Activated CD8-positive, alpha-beta T cell treated with anti-CD3 and anti-CD28 coated beads for 36 hours (primary cell): ENCODE measurements at regions of chr11 and their contacts with region 1.

Region 1: DNA sequence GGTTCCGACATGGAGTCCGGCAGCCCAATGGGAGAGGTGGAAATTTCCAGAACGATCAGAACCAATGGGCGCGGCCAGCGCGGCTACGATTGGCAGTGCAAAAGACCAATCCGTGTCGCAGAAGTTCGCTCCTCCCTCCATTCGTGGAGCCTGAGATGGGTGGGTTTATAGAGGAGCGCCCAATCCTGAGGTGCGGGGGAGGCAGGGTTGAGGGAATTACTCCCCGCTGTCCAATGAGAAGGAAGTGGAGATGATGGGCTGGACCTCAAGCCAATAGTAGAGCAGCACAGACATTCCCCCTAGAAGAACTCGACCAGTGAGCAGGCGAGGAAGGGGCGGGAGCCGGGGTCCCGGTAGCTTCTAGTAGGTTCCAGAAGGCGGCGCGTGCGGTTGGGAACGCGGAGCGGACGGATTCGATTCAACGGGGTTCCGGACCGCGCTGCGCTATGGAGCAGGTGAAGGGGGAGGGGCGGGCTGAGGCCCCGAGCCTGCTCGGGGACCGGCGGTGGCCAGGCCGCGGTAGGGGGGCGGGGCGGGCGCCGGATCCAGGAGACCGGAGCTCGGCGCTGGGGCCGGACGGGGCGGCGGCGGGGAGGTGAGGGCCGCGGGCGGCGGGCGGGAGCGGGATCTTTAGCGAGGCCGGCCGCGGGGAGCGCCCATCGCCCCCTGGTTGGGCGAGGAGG is at the start of gene STIP1:
- DNase-seq: peak; percentile 99
- ATAC-seq: peak; percentile 89
- H3K4me3 Mint-ChIP-seq: no peak within 1 kb of the TSS
- H3K27ac Mint-ChIP-seq: peak within 1 kb of the TSS; percentile 98
- H3K4me1 Mint-ChIP-seq: peaks cover 37% of the 10 kb centered on the region
- H3K27me3 Mint-ChIP-seq: no peaks in the 10 kb centered on the region
- CTCF ChIP-seq: no peak
- total RNA-seq, gene STIP1: 396 to 416 TPM

Region 2: DNA sequence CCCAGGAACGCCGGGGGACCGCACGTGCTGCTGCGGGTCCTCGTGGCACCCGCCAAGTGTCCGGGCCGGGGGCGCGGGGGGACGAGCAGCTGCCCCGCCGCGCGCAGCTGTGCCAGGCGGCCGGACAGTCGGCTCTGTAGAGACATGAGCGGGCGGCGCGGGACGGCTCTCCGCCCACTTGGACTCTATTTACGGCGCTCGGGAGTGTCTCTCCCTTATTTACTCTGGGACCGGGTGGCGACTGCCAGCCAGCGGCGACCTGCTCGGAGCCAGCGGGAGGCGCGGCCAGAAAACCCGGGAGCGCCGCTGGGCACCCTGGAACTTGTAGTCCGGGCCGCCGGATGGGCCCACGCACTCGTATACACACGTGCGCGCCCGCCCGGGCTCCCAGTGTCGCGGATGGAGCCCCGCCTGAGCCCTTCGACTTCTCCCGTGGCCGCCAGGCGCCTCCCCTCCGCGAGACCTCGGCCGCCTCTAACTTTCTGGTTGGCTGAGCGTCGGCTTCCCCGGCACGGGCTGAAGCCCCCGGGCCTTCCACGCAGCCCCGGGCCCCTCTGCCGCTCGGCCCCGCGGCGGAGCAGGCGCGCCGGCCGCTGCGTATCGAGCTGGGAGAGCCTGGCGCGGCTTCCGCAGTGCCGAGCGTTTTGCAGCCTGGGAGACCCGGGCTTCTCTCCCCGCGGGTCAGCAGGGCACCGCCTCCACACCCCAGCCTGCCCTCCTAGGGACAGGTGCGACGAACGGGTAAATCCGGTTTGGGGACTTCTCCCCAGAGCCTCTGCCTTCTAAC is 19.9 kb before region 1 on chr11 and contains the start of gene MACROD1:
- CTCF ChIA-PET with region 1: interaction called, 5 read pairs
- POLR2A ChIA-PET with region 1: interaction called, 25 read pairs
- intact Hi-C with region 1: no loop called
- DNase-seq: peak; percentile 92
- ATAC-seq: peak; percentile 93
- H3K4me3 Mint-ChIP-seq: peak within 1 kb of the TSS; percentile 84
- H3K27ac Mint-ChIP-seq: peak within 1 kb of the TSS; percentile 86
- H3K4me1 Mint-ChIP-seq: peaks cover 18% of the 10 kb centered on the region
- H3K27me3 Mint-ChIP-seq: no peaks in the 10 kb centered on the region
- CTCF ChIP-seq: no peak
- total RNA-seq, gene MACROD1: 38.7 to 38.8 TPM

Region 3: GRCh38 chr11:64173616-64174355 is 12.2 kb before region 1 on chr11:
- CTCF ChIA-PET with region 1: no interaction called
- POLR2A ChIA-PET with region 1: interaction called, 14 read pairs
- intact Hi-C with region 1: no loop called
- DNase-seq: no peak
- ATAC-seq: no peak
- H3K4me3 Mint-ChIP-seq: no peak overlapping the region
- H3K27ac Mint-ChIP-seq: no peak overlapping the region
- H3K4me1 Mint-ChIP-seq: peaks cover 16% of the 10 kb centered on the region
- H3K27me3 Mint-ChIP-seq: no peaks in the 10 kb centered on the region
- CTCF ChIP-seq: no peak

Region 4: GRCh38 chr11:64196626-64197025 is 10.7 kb after region 1 on chr11:
- CTCF ChIA-PET with region 1: no interaction called
- POLR2A ChIA-PET with region 1: interaction called, 206 read pairs
- intact Hi-C with region 1: no loop called
- DNase-seq: no peak
- ATAC-seq: no peak
- H3K4me3 Mint-ChIP-seq: no peak overlapping the region
- H3K27ac Mint-ChIP-seq: peak overlapping the region; percentile 40
- H3K4me1 Mint-ChIP-seq: peaks cover 21% of the 10 kb centered on the region
- H3K27me3 Mint-ChIP-seq: no peaks in the 10 kb centered on the region
- CTCF ChIP-seq: no peak

Region 5: DNA sequence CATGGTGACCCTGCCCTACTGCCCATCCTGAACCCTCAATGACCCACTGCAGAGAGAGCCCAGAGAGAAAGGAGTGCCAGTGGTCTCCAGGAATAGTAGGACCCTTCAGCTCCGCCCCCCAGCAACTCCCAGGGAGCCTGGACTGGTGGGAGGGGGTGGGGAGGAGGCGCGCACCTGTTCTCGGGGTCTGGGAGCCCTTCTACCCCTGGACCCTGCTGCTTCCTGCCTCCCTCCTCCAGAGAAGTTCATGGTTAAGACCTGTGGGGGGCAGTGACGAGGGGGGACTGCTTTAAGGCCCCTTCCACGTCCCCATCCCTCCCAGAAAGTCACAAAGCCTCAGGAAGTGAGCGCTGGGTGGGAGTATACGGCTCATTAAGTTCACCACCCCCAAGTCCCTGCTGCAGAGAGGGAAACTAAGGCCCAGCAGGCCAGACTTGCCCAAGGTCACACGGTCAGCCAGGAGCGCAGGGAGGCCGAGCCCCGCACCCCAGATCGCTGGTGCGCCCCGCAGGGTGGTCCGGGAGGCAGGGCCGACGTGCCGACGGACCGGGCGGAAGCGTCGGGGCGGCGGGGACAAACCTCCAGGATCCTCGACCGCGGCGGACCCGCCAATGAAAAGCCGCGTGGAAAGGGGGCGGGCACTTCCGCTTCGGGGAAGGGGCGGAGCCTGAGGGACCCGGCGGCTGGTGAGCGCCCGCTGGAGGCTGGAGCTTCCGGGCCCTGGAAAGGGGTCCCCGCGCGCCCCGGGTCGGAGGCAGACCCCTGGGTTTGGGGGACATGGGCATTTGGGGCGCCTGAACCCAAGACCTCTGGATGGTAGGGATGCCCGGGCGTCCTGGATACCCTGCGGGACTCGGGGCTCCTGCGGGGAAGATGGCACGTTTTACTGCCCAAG is 39.9 kb after region 1 on chr11 and contains the starts of genes NUDT22 and TRPT1:
- CTCF ChIA-PET with region 1: no interaction called
- POLR2A ChIA-PET with region 1: interaction called, 10 read pairs
- intact Hi-C with region 1: no loop called
- DNase-seq: peak; percentile 94
- ATAC-seq: peak; percentile 71
- H3K4me3 Mint-ChIP-seq: peak within 1 kb of the TSS; percentile 89
- H3K27ac Mint-ChIP-seq: peak within 1 kb of the TSS; percentile 87
- H3K4me1 Mint-ChIP-seq: peaks cover 30% of the 10 kb centered on the region
- H3K27me3 Mint-ChIP-seq: no peaks in the 10 kb centered on the region
- CTCF ChIP-seq: peak; percentile 42
- total RNA-seq, gene NUDT22: 66.0 to 69.2 TPM
- total RNA-seq, gene TRPT1: 33.7 to 41.5 TPM

Region 6: DNA sequence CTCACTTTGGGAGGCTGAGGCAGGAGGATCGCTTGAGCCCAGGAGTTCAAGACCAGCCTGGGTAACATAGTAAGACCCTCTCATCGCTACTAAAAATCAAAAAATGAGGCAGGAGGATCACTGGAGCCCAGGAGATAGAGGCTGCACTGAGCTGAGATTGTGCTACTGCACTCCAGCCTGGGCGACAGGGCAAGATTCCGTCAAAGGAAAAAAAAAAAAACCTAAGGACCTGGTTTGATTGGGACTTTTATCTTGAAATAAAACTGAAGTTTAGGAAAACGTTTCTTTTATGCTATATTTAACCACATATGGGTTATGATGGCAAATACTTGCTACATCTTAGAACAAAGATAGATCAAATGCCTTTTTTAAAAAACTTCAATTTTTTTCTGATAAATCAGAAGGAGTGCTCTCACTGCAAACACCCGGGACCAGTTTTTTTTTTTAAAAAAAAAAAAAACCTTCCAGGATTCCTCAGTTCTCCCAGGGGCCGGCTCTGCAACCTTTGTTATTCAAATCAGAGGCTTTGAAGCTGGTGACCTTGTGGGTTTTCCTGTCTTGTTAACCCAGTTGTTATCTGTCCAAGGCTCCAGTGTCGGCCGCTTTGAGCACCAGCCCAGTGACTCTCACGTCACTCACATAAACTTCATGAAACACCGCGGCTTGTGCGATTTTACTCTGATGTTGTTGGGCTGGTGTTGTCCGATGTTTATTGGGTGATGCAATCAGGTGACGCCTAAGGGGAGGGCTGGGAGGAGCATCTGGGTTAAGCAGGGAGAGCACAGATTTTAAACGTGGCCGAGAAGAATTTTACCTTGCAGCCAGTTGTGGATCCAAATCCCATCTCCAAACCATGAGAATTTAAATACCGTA is 380.3 kb after region 1 on chr11:
- CTCF ChIA-PET with region 1: no interaction called
- POLR2A ChIA-PET with region 1: no interaction called
- intact Hi-C with region 1: no loop called
- DNase-seq: peak; percentile 43
- ATAC-seq: peak; percentile 76
- H3K4me3 Mint-ChIP-seq: no peak overlapping the region
- H3K27ac Mint-ChIP-seq: no peak overlapping the region
- H3K4me1 Mint-ChIP-seq: no peaks in the 10 kb centered on the region
- H3K27me3 Mint-ChIP-seq: no peaks in the 10 kb centered on the region
- CTCF ChIP-seq: no peak